CD8-positive, alpha-beta T cell (primary cell): ENCODE measurements at regions of chr7 and their contacts with region 1.

Region 1: DNA sequence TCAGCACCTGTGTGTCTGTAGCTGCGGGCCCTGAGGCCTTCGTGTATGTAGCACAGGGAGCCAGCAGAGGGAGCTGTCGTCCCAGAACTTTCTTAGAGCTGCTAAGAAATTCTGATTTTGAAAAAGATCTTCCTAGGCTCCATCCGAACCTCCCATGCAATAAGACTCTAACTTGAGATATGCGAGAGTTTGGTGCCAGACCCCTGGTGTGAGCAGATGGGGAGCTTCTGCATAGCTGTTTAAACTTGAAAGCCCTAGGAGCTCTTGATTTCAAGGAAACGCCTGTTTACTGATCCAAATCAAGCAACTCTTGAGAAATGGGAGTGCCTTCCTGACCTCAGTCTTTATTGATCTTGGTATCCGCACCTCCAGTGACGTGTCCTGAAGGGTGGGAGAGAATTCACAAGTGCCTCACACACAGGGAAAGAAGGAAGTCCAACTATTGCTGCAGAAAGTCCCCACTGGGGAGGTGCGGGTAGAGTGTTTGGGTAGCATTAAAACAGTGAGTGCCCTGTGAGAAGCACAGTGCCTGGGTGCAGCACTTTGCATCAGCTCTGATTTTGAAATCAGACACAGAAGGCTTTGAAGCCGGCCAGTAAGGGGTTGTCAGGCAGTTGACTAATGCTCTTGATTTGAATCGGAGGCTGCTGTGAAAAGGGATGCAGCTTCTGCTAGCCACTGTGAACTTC is 66.4 kb upstream of the STRIP2 start:
- DNase-seq: peak; percentile 40 to 80 (median 73)
- ATAC-seq: peak; percentile 88
- H3K4me3 ChIP-seq: no peak overlapping the region
- H3K4me3 Mint-ChIP-seq: peak overlapping the region; percentile 20
- H3K27ac ChIP-seq: no peak overlapping the region
- H3K27ac Mint-ChIP-seq: no peak overlapping the region
- H3K4me1 ChIP-seq: no peaks in the 10 kb centered on the region
- H3K4me1 Mint-ChIP-seq: peaks cover 13% of the 10 kb centered on the region
- H3K27me3 ChIP-seq: no peaks in the 10 kb centered on the region
- H3K27me3 Mint-ChIP-seq: no peaks in the 10 kb centered on the region
- CTCF ChIP-seq: peak; percentile 69

Region 2: GRCh38 chr7:127930341-127931328 is 1437.2 kb before region 1 on chr7:
- CTCF ChIA-PET with region 1: no interaction called
- POLR2A ChIA-PET with region 1: no interaction called
- intact Hi-C with region 1: loop called in 1 of 2 experiments (anchors 5 kb)
- DNase-seq: no peak
- ATAC-seq: no peak
- H3K4me3 ChIP-seq: no peak overlapping the region
- H3K4me3 Mint-ChIP-seq: no peak overlapping the region
- H3K27ac ChIP-seq: no peak overlapping the region
- H3K27ac Mint-ChIP-seq: no peak overlapping the region
- H3K4me1 ChIP-seq: no peaks in the 10 kb centered on the region
- H3K4me1 Mint-ChIP-seq: peaks cover 10% of the 10 kb centered on the region
- H3K27me3 ChIP-seq: no peaks in the 10 kb centered on the region
- H3K27me3 Mint-ChIP-seq: no peaks in the 10 kb centered on the region
- CTCF ChIP-seq: no peak

Region 3: DNA sequence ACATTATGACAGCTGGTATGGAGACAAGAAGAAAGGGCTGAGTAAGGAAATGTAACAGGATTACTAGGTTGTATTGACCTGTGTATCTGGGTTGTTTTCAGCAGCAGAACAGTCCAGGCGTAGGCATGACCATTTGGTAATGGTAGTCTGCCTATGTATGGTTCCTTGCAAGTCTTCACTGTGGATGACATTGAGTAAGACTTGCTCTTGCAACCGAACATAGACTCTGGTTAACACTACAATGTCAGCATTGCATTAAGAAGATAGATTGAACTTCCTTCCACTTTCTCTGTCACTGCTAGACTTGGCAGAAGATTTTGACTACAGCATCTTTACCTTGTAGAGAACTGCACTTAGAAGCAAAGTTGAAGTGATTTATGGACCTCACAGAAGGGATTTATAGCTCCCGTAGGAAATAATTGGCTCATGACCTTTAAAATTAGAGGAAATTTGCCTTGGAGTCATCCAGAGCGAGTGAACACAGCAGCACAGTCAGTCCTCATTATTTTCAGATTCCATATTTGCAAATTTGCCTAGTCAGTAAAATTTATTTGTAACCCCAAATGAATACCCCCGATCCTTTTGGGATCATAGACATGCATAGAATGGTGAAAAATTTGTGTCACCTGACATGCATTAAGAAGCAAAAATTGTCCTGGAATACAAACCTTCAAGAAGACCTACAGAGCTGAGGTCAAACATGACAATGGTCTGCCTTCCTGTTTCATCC is 13.3 kb before region 1 on chr7:
- CTCF ChIA-PET with region 1: interaction called, 21 read pairs
- POLR2A ChIA-PET with region 1: no interaction called
- intact Hi-C with region 1: no loop called
- DNase-seq: no peak
- ATAC-seq: no peak
- H3K4me3 ChIP-seq: no peak overlapping the region
- H3K4me3 Mint-ChIP-seq: no peak overlapping the region
- H3K27ac ChIP-seq: no peak overlapping the region
- H3K27ac Mint-ChIP-seq: no peak overlapping the region
- H3K4me1 ChIP-seq: no peaks in the 10 kb centered on the region
- H3K4me1 Mint-ChIP-seq: peaks cover 2% of the 10 kb centered on the region
- H3K27me3 ChIP-seq: no peaks in the 10 kb centered on the region
- H3K27me3 Mint-ChIP-seq: no peaks in the 10 kb centered on the region
- CTCF ChIP-seq: no peak

Region 4: DNA sequence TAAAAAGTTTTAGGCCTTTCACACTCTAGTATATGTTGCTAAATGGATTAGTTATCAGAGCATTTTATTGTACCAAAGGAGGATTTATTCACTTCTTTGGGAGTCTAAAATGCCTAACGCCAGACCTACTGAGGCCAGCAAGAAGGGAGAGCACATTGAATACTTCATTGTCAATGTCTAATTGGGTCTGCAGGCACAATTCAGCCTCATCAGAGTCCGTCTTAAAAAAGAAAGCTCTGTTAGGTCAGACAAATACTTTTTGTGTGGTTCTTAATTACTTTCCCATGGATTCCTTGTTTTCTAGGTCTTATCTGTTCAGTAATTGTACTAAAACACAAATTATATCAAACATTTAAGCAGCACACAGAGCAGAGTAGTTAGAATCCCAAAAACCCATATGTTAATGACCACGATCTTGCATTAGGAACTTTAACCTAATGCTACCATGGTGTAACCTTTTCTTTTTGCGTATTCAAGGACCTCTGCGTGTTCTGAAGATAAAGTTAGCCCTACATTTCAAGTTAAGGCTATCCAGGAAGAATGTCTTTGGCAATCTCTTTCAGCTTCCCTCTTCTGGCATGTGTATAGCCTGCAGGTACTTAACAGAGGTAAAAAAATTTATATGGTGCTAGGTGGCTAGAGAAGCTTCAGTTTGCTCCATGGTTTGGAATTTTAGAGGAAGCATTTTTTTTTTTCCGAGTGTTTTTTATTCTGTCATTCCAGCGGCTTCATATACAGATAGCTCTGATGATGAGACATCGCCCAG is 20.7 kb after region 1 on chr7:
- CTCF ChIA-PET with region 1: interaction called, 11 read pairs
- POLR2A ChIA-PET with region 1: no interaction called
- intact Hi-C with region 1: no loop called
- DNase-seq: no peak
- ATAC-seq: no peak
- H3K4me3 ChIP-seq: no peak overlapping the region
- H3K4me3 Mint-ChIP-seq: no peak overlapping the region
- H3K27ac ChIP-seq: no peak overlapping the region
- H3K27ac Mint-ChIP-seq: no peak overlapping the region
- H3K4me1 ChIP-seq: no peaks in the 10 kb centered on the region
- H3K4me1 Mint-ChIP-seq: no peaks in the 10 kb centered on the region
- H3K27me3 ChIP-seq: no peaks in the 10 kb centered on the region
- H3K27me3 Mint-ChIP-seq: no peaks in the 10 kb centered on the region
- CTCF ChIP-seq: no peak

Region 5: DNA sequence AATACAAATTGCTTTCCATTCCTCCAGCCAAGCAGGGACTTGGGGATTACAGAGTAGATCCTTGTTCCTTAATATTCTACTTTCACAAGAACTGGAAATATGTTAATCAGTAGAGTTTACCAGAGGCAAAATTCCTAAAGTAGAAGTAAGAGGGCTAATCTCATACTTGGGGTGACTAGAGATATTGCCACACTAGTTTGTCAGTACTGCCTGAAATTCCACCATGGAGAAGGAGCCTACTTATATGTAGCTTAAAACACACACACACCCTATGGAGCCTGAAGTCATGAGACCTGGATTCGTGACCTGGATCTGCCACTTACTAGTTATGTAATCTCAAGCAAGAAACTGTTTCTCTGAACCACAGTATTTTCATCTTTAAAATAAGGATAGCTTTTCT is 100.2 kb after region 1 on chr7:
- CTCF ChIA-PET with region 1: interaction called, 137 read pairs
- POLR2A ChIA-PET with region 1: no interaction called
- intact Hi-C with region 1: loop called (anchors 1 kb)
- DNase-seq: no peak
- ATAC-seq: no peak
- H3K4me3 ChIP-seq: no peak overlapping the region
- H3K4me3 Mint-ChIP-seq: no peak overlapping the region
- H3K27ac ChIP-seq: no peak overlapping the region
- H3K27ac Mint-ChIP-seq: no peak overlapping the region
- H3K4me1 ChIP-seq: no peaks in the 10 kb centered on the region
- H3K4me1 Mint-ChIP-seq: peaks cover 2% of the 10 kb centered on the region
- H3K27me3 ChIP-seq: no peaks in the 10 kb centered on the region
- H3K27me3 Mint-ChIP-seq: no peaks in the 10 kb centered on the region
- CTCF ChIP-seq: no peak

Region 6: DNA sequence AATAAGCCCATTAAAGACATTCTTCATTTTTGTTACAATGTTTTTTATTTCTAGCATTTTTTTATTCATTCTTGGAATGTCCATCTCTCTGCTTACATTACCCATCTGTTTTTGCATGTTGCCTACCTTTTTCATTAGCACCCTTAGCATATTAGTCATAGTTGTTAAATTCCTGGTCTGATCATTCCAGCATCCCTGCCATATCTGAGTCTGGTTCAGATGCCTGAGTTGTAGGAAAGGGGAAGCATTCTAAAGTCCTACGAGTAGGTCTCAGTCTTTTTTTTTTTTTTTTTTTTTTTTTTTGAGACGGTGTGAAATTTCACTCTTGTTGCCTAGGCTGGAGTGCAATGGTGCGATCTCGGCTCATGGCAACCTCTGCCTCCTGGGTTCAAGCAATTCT is 224.0 kb after region 1 on chr7:
- CTCF ChIA-PET with region 1: no interaction called
- POLR2A ChIA-PET with region 1: no interaction called
- intact Hi-C with region 1: no loop called
- DNase-seq: no peak
- ATAC-seq: no peak
- H3K4me3 ChIP-seq: no peak overlapping the region
- H3K4me3 Mint-ChIP-seq: no peak overlapping the region
- H3K27ac ChIP-seq: no peak overlapping the region
- H3K27ac Mint-ChIP-seq: no peak overlapping the region
- H3K4me1 ChIP-seq: no peaks in the 10 kb centered on the region
- H3K4me1 Mint-ChIP-seq: no peaks in the 10 kb centered on the region
- H3K27me3 ChIP-seq: peaks cover 0 to 5% of the 10 kb centered on the region in 2 experiments
- H3K27me3 Mint-ChIP-seq: peaks cover 12% of the 10 kb centered on the region
- CTCF ChIP-seq: no peak

Region 7: GRCh38 chr7:129635300-129636029 is 267.6 kb after region 1 on chr7:
- CTCF ChIA-PET with region 1: interaction called, 15 read pairs
- POLR2A ChIA-PET with region 1: interaction called, 4 read pairs
- intact Hi-C with region 1: loop called (anchors 1 kb)
- DNase-seq: peak; percentile 41 to 82 (median 70)
- ATAC-seq: peak; percentile 98
- H3K4me3 ChIP-seq: no peak overlapping the region
- H3K4me3 Mint-ChIP-seq: no peak overlapping the region
- H3K27ac ChIP-seq: no peak overlapping the region
- H3K27ac Mint-ChIP-seq: peak overlapping the region; percentile 8
- H3K4me1 ChIP-seq: peaks cover 10% of the 10 kb centered on the region
- H3K4me1 Mint-ChIP-seq: peaks cover 56% of the 10 kb centered on the region
- H3K27me3 ChIP-seq: no peaks in the 10 kb centered on the region
- H3K27me3 Mint-ChIP-seq: no peaks in the 10 kb centered on the region
- CTCF ChIP-seq: peak; percentile 79

Region 8: DNA sequence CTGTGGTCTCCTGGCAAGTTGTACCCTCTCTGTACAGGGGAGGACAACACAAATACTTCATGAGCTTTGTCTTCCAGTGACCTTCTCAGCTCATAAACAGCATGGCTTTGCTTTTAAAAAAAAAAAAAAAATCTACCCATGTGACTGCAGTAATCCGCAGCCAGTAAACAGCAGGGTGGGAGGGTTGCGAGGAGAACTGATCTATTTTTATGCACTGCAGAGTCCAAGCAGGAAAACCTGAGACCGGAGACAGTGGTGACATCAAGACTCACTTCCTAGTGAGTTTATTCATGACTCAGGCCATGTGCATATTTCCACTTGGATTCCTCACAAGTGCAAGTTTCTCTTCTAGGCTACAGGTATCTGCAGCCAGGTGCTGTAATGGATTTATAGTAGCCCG is 371.6 kb after region 1 on chr7:
- CTCF ChIA-PET with region 1: no interaction called
- POLR2A ChIA-PET with region 1: no interaction called
- intact Hi-C with region 1: no loop called
- DNase-seq: no peak
- ATAC-seq: no peak
- H3K4me3 ChIP-seq: no peak overlapping the region
- H3K4me3 Mint-ChIP-seq: no peak overlapping the region
- H3K27ac ChIP-seq: no peak overlapping the region
- H3K27ac Mint-ChIP-seq: no peak overlapping the region
- H3K4me1 ChIP-seq: no peaks in the 10 kb centered on the region
- H3K4me1 Mint-ChIP-seq: no peaks in the 10 kb centered on the region
- H3K27me3 ChIP-seq: no peaks in the 10 kb centered on the region
- H3K27me3 Mint-ChIP-seq: no peaks in the 10 kb centered on the region
- CTCF ChIP-seq: no peak

Region 9: GRCh38 chr7:130010689-130011412 is 643.0 kb after region 1 on chr7:
- CTCF ChIA-PET with region 1: interaction called, 6 read pairs
- POLR2A ChIA-PET with region 1: no interaction called
- intact Hi-C with region 1: loop called (anchors 1 kb)
- DNase-seq: peak; percentile 78 to 92 (median 87)
- ATAC-seq: peak; percentile 96
- H3K4me3 ChIP-seq: no peak overlapping the region
- H3K4me3 Mint-ChIP-seq: no peak overlapping the region
- H3K27ac ChIP-seq: no peak overlapping the region
- H3K27ac Mint-ChIP-seq: no peak overlapping the region
- H3K4me1 ChIP-seq: no peaks in the 10 kb centered on the region
- H3K4me1 Mint-ChIP-seq: peaks cover 2% of the 10 kb centered on the region
- H3K27me3 ChIP-seq: no peaks in the 10 kb centered on the region
- H3K27me3 Mint-ChIP-seq: no peaks in the 10 kb centered on the region
- CTCF ChIP-seq: peak; percentile 79

Region 10: GRCh38 chr7:130352221-130353075 is 984.6 kb after region 1 on chr7:
- CTCF ChIA-PET with region 1: no interaction called
- POLR2A ChIA-PET with region 1: no interaction called
- intact Hi-C with region 1: no loop called
- DNase-seq: no peak
- ATAC-seq: no peak
- H3K4me3 ChIP-seq: no peak overlapping the region
- H3K4me3 Mint-ChIP-seq: no peak overlapping the region
- H3K27ac ChIP-seq: no peak overlapping the region
- H3K27ac Mint-ChIP-seq: no peak overlapping the region
- H3K4me1 ChIP-seq: no peaks in the 10 kb centered on the region
- H3K4me1 Mint-ChIP-seq: peaks cover 3% of the 10 kb centered on the region
- H3K27me3 ChIP-seq: no peaks in the 10 kb centered on the region
- H3K27me3 Mint-ChIP-seq: no peaks in the 10 kb centered on the region
- CTCF ChIP-seq: no peak